Left ventricle myocardium inferior (tissue), 1 donor: ENCODE measurements at regions of chr6 and their contacts with region 1.

Region 1: GRCh38 chr6:163347021-163347446 is 67.5 kb upstream of the QKI start:
- DNase-seq: no peak
- H3K4me3 ChIP-seq: peak overlapping the region; percentile 20
- H3K27ac ChIP-seq: peak overlapping the region; percentile 64
- H3K4me1 ChIP-seq: peaks cover 35% of the 10 kb centered on the region
- H3K27me3 ChIP-seq: no peaks in the 10 kb centered on the region
- CTCF ChIP-seq: no peak

Region 2: GRCh38 chr6:163392533-163392932 is 45.5 kb after region 1 on chr6:
- intact Hi-C with region 1: no loop called
- DNase-seq: no peak
- H3K4me3 ChIP-seq: no peak overlapping the region
- H3K27ac ChIP-seq: peak overlapping the region; percentile 55
- H3K4me1 ChIP-seq: peaks cover 55% of the 10 kb centered on the region
- H3K27me3 ChIP-seq: no peaks in the 10 kb centered on the region
- CTCF ChIP-seq: no peak

Region 3: DNA sequence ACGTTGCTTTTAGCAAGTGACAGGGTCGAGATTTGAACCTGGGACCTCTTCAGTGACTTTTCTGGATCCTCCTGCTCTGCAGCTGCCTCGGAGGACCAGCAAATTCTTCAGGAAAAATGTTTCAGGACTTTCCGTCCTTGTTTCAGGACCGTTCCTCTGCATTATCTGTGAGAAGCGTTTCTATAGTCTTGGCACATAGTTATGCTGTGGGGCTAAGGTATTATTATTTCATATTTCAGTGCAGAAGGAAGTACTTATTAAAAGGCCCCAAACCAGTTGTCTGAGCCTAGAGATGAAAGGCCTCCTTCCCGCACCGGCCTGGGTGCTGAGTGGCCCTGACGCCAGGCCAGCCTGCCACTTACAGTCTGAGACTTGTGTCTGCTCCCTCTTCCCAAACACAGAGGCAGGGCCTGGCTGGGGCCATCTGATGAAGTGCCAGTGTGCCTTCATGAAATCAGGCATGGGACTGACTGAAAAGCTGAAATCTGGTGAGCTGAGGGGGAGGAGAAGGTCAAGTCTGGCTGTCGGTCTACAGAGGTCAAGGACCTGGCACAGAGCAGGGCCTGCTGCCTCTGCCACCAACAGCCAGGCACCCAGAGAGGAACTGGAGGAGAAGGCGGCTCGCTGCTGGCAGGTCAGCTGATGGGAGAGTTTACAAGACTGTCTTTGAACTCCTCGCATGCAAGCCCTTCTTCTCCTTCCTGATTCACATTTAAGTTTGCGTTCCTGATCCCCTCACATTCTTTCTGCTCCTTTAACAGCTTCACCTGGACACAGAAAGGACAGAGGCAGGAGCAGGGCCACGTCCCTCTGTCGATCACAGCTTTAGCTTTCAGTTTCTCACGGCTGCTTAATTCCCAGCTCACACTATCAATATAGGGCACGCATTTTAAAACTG is 58.6 kb after region 1 on chr6:
- intact Hi-C with region 1: loop called (anchors 10 kb)
- DNase-seq: peak; percentile 69
- H3K4me3 ChIP-seq: peak overlapping the region; percentile 58
- H3K27ac ChIP-seq: peak overlapping the region; percentile 94
- H3K4me1 ChIP-seq: peaks cover 37% of the 10 kb centered on the region
- H3K27me3 ChIP-seq: no peaks in the 10 kb centered on the region
- CTCF ChIP-seq: no peak

Region 4: GRCh38 chr6:164749221-164750064 is 1402.4 kb after region 1 on chr6:
- intact Hi-C with region 1: no loop called
- DNase-seq: peak; percentile 25
- H3K4me3 ChIP-seq: no peak overlapping the region
- H3K27ac ChIP-seq: no peak overlapping the region
- H3K4me1 ChIP-seq: no peaks in the 10 kb centered on the region
- H3K27me3 ChIP-seq: no peaks in the 10 kb centered on the region
- CTCF ChIP-seq: no peak